ENCODE measurements at regions of chr2 and their contacts with region 1.

Region 1: DNA sequence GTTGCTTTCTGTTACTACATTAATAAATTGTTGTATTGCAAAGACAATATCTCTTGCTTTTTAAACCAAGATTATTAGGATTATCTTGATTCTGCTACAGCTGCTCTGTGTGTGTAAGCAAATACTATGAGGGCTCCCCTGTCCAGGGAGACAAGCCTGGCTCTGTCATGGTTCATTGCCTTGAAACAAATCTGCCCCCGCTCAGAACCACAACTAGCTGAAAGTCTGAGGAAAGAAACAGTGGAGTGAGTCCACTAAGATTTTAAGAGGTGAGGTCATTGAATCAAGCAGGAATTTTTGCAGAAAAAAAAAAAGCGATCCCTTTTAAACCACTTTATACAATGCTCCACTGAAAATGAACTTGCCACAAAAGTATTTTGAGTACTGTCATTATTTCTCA is 30.8 kb upstream of the LRRTM4 start:
- DNase-seq: no peak
- ATAC-seq: no peak
- H3K4me3 ChIP-seq: no peak overlapping the region
- H3K27ac ChIP-seq: no peak overlapping the region
- H3K4me1 ChIP-seq: no peaks in the 10 kb centered on the region
- H3K27me3 ChIP-seq: no peaks in the 10 kb centered on the region
- CTCF ChIP-seq: no peak
- EP300 ChIP-seq: no peak
- POLR2A ChIP-seq: no peak
- RAD21 ChIP-seq: no peak

Region 2: DNA sequence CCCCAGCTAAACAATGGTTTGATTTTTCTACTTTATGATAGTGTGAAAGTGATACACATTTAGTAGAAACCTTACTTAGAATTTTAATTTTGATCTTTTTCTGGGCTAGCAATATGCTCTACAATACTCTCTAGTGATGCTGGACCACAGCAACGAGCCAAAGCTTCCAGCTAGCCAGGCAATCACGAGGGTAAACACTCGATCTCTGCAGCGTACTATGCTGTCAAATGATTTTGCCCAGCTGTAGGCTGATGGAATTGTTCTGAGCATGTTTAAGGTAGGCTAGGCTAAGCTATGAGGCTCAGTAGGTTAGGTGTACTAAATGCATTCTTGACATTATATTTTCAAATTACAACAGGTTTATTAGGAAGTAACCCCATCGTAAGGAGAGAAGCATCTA is 238.2 kb before region 1 on chr2:
- CTCF ChIA-PET with region 1: no interaction called
- POLR2A ChIA-PET with region 1: no interaction called
- in situ Hi-C with region 1: no loop called
- intact Hi-C with region 1: no loop called
- DNase-seq: no peak
- ATAC-seq: no peak
- H3K4me3 ChIP-seq: no peak overlapping the region
- H3K27ac ChIP-seq: no peak overlapping the region
- H3K4me1 ChIP-seq: no peaks in the 10 kb centered on the region
- H3K27me3 ChIP-seq: no peaks in the 10 kb centered on the region
- CTCF ChIP-seq: no peak
- EP300 ChIP-seq: no peak
- POLR2A ChIP-seq: no peak
- RAD21 ChIP-seq: no peak

Region 3: GRCh38 chr2:77567723-77568122 is 14.8 kb after region 1 on chr2:
- CTCF ChIA-PET with region 1: no interaction called
- POLR2A ChIA-PET with region 1: no interaction called
- in situ Hi-C with region 1: no loop called
- intact Hi-C with region 1: loop called (anchors 1 kb)
- DNase-seq: no peak
- ATAC-seq: peak; percentile 68; the same call in 2 of the 3 replicates
- H3K4me3 ChIP-seq: no peak overlapping the region
- H3K27ac ChIP-seq: no peak overlapping the region
- H3K4me1 ChIP-seq: peaks cover 10% of the 10 kb centered on the region
- H3K27me3 ChIP-seq: no peaks in the 10 kb centered on the region
- CTCF ChIP-seq: no peak
- EP300 ChIP-seq: no peak
- POLR2A ChIP-seq: no peak
- RAD21 ChIP-seq: no peak

Region 4: GRCh38 chr2:77590298-77590917 is 37.5 kb after region 1 on chr2:
- CTCF ChIA-PET with region 1: no interaction called
- POLR2A ChIA-PET with region 1: no interaction called
- in situ Hi-C with region 1: no loop called
- intact Hi-C with region 1: no loop called
- DNase-seq: no peak
- ATAC-seq: peak; percentile 34; the same call in 1 of the 3 replicates
- H3K4me3 ChIP-seq: no peak overlapping the region
- H3K27ac ChIP-seq: no peak overlapping the region
- H3K4me1 ChIP-seq: no peaks in the 10 kb centered on the region
- H3K27me3 ChIP-seq: no peaks in the 10 kb centered on the region
- CTCF ChIP-seq: no peak
- EP300 ChIP-seq: no peak
- POLR2A ChIP-seq: no peak
- RAD21 ChIP-seq: no peak

Region 5: GRCh38 chr2:78077633-78078032 is 524.7 kb after region 1 on chr2:
- CTCF ChIA-PET with region 1: no interaction called
- POLR2A ChIA-PET with region 1: no interaction called
- in situ Hi-C with region 1: no loop called
- intact Hi-C with region 1: no loop called
- DNase-seq: no peak
- ATAC-seq: no peak
- H3K4me3 ChIP-seq: no peak overlapping the region
- H3K27ac ChIP-seq: no peak overlapping the region
- H3K4me1 ChIP-seq: no peaks in the 10 kb centered on the region
- H3K27me3 ChIP-seq: no peaks in the 10 kb centered on the region
- CTCF ChIP-seq: no peak
- EP300 ChIP-seq: no peak
- POLR2A ChIP-seq: no peak
- RAD21 ChIP-seq: no peak